Ascending aorta (tissue), 2 donors: ENCODE measurements at regions of chr9 and their contacts with region 1.

Region 1: GRCh38 chr9:34126207-34127034 is at the start of gene DCAF12:
- DNase-seq: peak; percentile 31 to 93
- H3K4me3 ChIP-seq: peak within 1 kb of the TSS; percentile 61 to 85
- H3K27ac ChIP-seq: peak within 1 kb of the TSS; percentile 90 to 95
- H3K4me1 ChIP-seq: peaks cover 9 to 12% of the 10 kb centered on the region in 2 donors
- H3K27me3 ChIP-seq: no peaks in the 10 kb centered on the region
- CTCF ChIP-seq: peak in 1 of 3 experiments; percentile 22
- total RNA-seq, gene DCAF12: 27.5 TPM

Region 2: GRCh38 chr9:34048923-34049697 is 77.3 kb before region 1 on chr9:
- intact Hi-C with region 1: loop called (anchors 1 kb)
- DNase-seq: peak; percentile 94 to 98
- H3K4me3 ChIP-seq: peak overlapping the region; percentile 95 to 98
- H3K27ac ChIP-seq: peak overlapping the region; percentile 85 to 95
- H3K4me1 ChIP-seq: peaks cover 6 to 9% of the 10 kb centered on the region in 2 donors
- H3K27me3 ChIP-seq: no peaks in the 10 kb centered on the region
- CTCF ChIP-seq: no peak

Region 3: GRCh38 chr9:34085581-34086500 is 40.6 kb before region 1 on chr9:
- intact Hi-C with region 1: loop called (anchors 5 kb)
- DNase-seq: no peak
- H3K4me3 ChIP-seq: no peak overlapping the region
- H3K27ac ChIP-seq: peak overlapping the region; percentile 81 to 86
- H3K4me1 ChIP-seq: peaks cover 14 to 23% of the 10 kb centered on the region in 2 donors
- H3K27me3 ChIP-seq: no peaks in the 10 kb centered on the region
- CTCF ChIP-seq: no peak

Region 4: DNA sequence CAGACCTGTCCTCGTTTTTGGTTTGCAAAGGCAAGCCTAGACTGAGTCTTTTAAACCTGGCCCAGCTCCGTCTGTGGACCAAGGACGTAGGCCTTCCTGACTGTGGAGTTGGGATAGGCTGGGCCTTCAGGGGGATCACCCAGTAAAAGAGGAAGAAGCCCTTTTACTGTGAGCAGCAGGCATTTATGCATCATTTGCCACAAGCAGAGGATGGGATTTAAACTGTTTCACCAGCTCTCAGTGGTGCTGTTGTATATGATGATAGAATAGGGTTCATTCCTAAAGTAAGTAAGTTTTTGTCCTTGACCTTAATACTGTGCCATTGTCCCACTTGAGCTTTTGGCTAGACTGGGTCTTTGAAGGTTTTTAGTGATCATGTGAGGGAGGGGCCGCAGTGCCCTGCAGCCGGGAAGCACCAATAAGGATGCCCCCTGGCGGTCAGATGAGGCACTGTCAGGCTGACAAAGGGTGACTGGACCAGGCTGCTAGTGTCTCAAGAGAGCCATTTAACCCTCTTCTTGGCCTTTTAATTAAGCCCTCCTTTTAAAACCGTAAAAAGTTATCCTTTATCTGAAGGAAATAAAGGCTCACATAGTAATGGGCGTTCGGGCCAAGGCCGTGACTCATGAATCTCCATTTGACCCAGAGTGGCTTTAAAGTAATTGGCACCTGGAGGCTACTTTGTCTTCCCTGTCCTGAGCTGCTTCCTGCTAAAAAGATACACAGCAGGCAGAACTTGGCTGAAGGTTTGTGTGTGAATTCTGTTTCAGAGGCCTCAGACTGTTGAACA is 126.4 kb after region 1 on chr9:
- intact Hi-C with region 1: loop called (anchors 1 kb)
- DNase-seq: peak in 1 of 2 donors; percentile 71
- H3K4me3 ChIP-seq: no peak overlapping the region
- H3K27ac ChIP-seq: peak overlapping the region; percentile 79 to 81
- H3K4me1 ChIP-seq: peaks cover 16 to 48% of the 10 kb centered on the region in 2 donors
- H3K27me3 ChIP-seq: no peaks in the 10 kb centered on the region
- CTCF ChIP-seq: peak; percentile 59 to 86 (median 77)

Region 5: GRCh38 chr9:34376596-34377403 is 250.4 kb after region 1 on chr9 and contains the start of gene MYORG:
- intact Hi-C with region 1: loop called (anchors 1 kb)
- DNase-seq: peak; percentile 88 to 97
- H3K4me3 ChIP-seq: peak within 1 kb of the TSS; percentile 85 to 86
- H3K27ac ChIP-seq: peak within 1 kb of the TSS; percentile 74 to 78
- H3K4me1 ChIP-seq: peaks cover 7 to 16% of the 10 kb centered on the region in 2 donors
- H3K27me3 ChIP-seq: no peaks in the 10 kb centered on the region
- CTCF ChIP-seq: no peak
- total RNA-seq, gene MYORG: 11.0 TPM

Region 6: DNA sequence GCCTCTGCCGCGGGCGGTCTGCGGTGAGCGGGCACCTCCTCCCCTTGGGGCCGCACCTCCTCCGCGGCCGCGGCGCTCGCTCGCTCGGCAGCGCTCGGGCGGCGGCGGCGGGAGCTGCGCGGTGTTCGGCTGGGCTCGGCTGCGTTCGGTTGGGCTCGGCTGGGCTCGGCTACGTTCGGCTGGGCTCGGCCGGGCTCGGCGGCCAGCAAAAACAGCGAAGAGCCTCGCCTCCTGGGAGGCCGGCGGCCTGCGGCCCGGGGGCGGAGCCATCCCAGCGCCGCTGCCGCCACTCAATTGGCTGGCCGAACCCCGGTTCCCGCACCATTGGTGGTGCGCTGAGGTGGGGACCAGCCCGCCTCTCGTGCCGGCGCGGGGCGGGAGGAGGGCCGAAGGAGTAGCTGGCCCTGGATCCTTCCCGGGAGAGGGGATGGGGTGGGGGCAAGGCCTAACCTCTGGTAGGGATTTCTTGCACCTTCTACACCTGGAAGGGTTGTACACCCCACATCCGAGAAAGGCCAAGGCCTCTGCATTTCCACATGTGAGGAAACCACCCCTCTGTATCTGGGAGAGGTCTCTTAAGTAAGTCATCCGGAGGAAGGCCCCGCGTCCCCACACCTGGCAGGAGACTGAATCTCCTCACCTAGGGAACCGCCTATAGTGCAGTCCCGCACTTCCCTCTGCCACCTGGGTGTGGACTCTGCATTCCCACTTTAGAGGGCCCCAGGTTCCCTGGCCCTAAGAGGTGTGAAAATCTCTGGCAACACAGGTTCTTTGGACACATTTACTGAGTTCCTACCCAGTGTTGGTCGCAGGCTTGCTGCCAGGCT is 396.8 kb after region 1 on chr9 and contains the start of gene ENHO:
- intact Hi-C with region 1: loop called (anchors 5 kb)
- DNase-seq: peak; percentile 26 to 93
- H3K4me3 ChIP-seq: peak within 1 kb of the TSS; percentile 47 to 68
- H3K27ac ChIP-seq: no peak within 1 kb of the TSS
- H3K4me1 ChIP-seq: peaks cover 3 to 5% of the 10 kb centered on the region in 2 donors
- H3K27me3 ChIP-seq: no peaks in the 10 kb centered on the region
- CTCF ChIP-seq: no peak
- total RNA-seq, gene ENHO: not detected